ENCODE measurements at regions of chr1 and their contacts with region 1.

Region 1: DNA sequence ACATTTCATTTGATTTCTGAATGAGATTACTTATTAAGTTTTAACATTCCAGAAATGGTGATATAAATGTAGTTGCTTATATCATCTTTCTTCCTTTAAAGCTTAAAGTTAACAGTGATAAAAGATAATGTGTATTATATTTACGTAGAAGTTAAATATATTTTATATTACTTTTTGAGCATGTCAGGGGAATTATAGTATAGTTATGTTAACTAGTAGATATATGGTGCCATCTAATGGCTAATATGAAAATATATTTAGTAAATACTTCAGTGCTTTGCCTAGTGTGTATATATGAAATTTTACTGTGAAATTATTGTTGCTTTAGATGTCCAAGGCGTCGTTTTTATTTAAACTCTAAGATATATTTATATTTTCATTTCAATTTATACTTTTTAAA is 51.5 kb downstream of the SYT14 start:
- DNase-seq: no peak
- ATAC-seq: no peak
- H3K4me3 ChIP-seq: no peak overlapping the region
- H3K27ac ChIP-seq: no peak overlapping the region
- H3K4me1 ChIP-seq: no peaks in the 10 kb centered on the region
- H3K27me3 ChIP-seq: peaks cover 0 to 4% of the 10 kb centered on the region in 2 donors

Region 2: GRCh38 chr1:209860293-209860881 is 129.1 kb before region 1 on chr1:
- intact Hi-C with region 1: loop called (anchors 5 to 10 kb)
- DNase-seq: peak; percentile 78 to 85
- ATAC-seq: no peak
- H3K4me3 ChIP-seq: no peak overlapping the region
- H3K27ac ChIP-seq: no peak overlapping the region
- H3K4me1 ChIP-seq: no peaks in the 10 kb centered on the region
- H3K27me3 ChIP-seq: no peaks in the 10 kb centered on the region